ENCODE measurements at regions of chr9 and their contacts with region 1.

Region 1: GRCh38 chr9:107465467-107466451 is 23.8 kb downstream of the KLF4 start:
- DNase-seq: no peak
- H3K4me3 ChIP-seq: peak overlapping the region; percentile 65
- H3K27me3 ChIP-seq: no peaks in the 10 kb centered on the region
- CTCF ChIP-seq: peak; percentile 69

Region 2: DNA sequence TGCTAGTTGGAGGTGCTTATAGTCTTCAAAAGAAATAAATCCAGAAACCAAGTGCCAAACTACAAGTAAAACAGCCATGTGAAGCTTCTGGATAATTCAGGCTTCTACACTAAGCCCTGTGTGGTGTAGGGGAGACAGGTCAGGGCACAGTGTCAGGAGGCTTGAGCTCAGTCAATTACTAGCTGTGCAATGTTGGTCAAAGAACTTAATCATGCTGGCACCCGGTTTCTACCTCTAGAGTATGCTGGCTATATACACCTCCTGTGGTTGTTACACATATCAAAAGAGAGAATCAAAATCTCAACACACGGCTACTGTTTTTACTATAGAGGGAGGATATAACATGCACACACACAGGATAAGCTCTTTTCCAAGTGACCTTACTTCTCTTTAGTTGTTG is 1072.5 kb before region 1 on chr9:
- CTCF ChIA-PET with region 1: no interaction called
- POLR2A ChIA-PET with region 1: no interaction called
- DNase-seq: no peak
- H3K4me3 ChIP-seq: no peak overlapping the region
- H3K27me3 ChIP-seq: no peaks in the 10 kb centered on the region
- CTCF ChIP-seq: no peak

Region 3: DNA sequence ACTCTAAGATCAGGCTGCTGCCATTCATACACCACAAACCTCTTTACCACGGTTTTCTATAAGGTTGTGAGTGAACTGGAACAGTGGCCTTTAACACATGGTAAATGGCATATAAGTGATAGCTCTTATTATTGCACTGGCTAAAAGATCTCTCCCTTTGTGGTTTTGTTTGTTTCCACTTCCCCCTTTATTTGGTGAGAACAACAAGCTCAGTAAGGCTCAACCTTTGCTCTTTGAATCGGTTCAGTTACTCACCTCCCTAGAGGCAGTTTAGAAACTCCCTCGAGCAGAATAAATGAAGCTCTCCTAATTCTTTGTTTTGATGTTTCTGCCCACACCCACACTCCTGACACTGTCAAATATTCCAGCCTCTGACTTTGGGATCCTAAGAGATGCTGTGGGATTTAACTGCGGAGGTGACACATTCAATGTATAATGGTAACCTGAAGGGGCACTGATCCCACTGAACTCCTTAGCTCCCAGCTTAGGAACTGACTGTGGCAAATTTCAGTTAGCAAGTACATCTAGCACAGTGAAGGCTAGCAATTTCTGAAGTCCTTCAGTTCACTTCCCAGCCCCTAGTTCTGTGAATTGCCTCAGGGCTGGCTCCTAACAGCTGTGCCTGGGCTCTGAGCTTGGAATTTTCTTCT is 205.2 kb before region 1 on chr9:
- CTCF ChIA-PET with region 1: no interaction called
- POLR2A ChIA-PET with region 1: no interaction called
- DNase-seq: no peak
- H3K4me3 ChIP-seq: no peak overlapping the region
- H3K27me3 ChIP-seq: no peaks in the 10 kb centered on the region
- CTCF ChIP-seq: no peak

Region 4: GRCh38 chr9:107455425-107456135 is 10.2 kb before region 1 on chr9:
- CTCF ChIA-PET with region 1: interaction called, 12 read pairs
- POLR2A ChIA-PET with region 1: no interaction called
- DNase-seq: no peak
- H3K4me3 ChIP-seq: no peak overlapping the region
- H3K27me3 ChIP-seq: no peaks in the 10 kb centered on the region
- CTCF ChIP-seq: no peak

Region 5: GRCh38 chr9:108272349-108272899 is 806.7 kb after region 1 on chr9:
- CTCF ChIA-PET with region 1: interaction called, 10 read pairs
- POLR2A ChIA-PET with region 1: no interaction called
- DNase-seq: no peak
- H3K4me3 ChIP-seq: peak overlapping the region; percentile 12; the same call in 1 of the 2 replicates
- H3K27me3 ChIP-seq: no peaks in the 10 kb centered on the region
- CTCF ChIP-seq: peak; percentile 65

Region 6: GRCh38 chr9:108535526-108535925 is 1069.8 kb after region 1 on chr9:
- CTCF ChIA-PET with region 1: interaction called, 12 read pairs
- POLR2A ChIA-PET with region 1: no interaction called
- DNase-seq: no peak
- H3K4me3 ChIP-seq: no peak overlapping the region
- H3K27me3 ChIP-seq: no peaks in the 10 kb centered on the region; the same call in 1 of the 2 replicates
- CTCF ChIP-seq: peak; percentile 24; the same call in 1 of the 2 replicates

Region 7: GRCh38 chr9:108761655-108762347 is 1296.0 kb after region 1 on chr9:
- CTCF ChIA-PET with region 1: interaction called, 30 read pairs
- POLR2A ChIA-PET with region 1: no interaction called
- DNase-seq: no peak
- H3K4me3 ChIP-seq: no peak overlapping the region
- H3K27me3 ChIP-seq: no peaks in the 10 kb centered on the region; the same call in 1 of the 2 replicates
- CTCF ChIP-seq: peak; percentile 83